ENCODE measurements at regions of chr15 and their contacts with region 1.

Region 1: GRCh38 chr15:99213187-99213811 is 36.1 kb downstream of the TTC23 start:
- DNase-seq: peak; percentile 58 to 93 (median 84)
- H3K4me3 ChIP-seq: no peak overlapping the region
- H3K27ac ChIP-seq: peak overlapping the region in 7 of 59 donors; percentile 4 to 71 (median 25)
- H3K27me3 ChIP-seq: no peaks in the 10 kb centered on the region
- CTCF ChIP-seq: peak; percentile 89 to 99 (median 94)

Region 2: DNA sequence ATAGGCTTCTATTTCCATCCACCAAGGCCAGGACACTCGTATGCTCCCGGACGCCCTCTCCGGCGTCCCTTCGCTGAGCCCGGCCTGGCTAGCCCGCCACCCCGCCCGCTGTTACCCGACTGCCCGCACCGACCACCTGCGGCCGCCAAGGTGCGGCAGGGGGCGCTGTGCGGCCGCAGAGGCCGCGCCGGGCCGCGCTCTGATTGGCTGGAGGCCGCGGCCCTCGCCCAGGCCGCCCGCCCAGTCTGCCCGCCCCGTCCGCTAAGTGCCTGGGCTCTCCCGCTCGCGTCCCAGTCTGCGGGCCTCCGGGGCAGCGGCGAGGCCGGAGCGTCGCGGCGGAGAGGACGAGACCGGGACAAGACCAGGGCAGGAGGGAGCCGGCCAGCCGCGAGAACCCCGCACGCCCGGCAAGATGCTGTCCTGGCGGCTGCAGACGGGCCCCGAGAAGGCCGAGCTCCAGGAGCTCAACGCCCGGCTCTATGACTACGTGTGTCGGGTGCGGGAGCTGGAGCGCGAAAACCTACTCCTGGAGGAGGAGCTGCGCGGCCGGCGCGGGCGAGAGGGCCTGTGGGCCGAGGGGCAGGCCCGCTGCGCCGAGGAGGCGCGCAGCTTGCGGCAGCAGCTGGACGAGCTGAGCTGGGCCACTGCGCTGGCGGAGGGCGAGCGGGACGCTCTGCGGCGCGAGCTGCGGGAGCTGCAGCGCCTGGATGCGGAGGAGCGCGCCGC is 108.3 kb before region 1 on chr15 and contains the start of gene SYNM:
- intact Hi-C with region 1: loop called (anchors 1 to 2 kb)
- DNase-seq: peak; percentile 20 to 90 (median 73)
- H3K4me3 ChIP-seq: peak within 1 kb of the TSS; percentile 53 to 83 (median 74)
- H3K27ac ChIP-seq: peak within 1 kb of the TSS in 57 of 59 donors; percentile 41 to 97 (median 86)
- H3K27me3 ChIP-seq: no peaks in the 10 kb centered on the region
- CTCF ChIP-seq: peak; percentile 50 to 98 (median 86)
- total RNA-seq, gene SYNM: 54.7 to 162 (median 78.7) TPM

Region 3: GRCh38 chr15:99169769-99170311 is 43.5 kb before region 1 on chr15:
- intact Hi-C with region 1: loop called in 1 of 2 experiments (anchors 2 kb)
- DNase-seq: no peak
- H3K4me3 ChIP-seq: no peak overlapping the region
- H3K27ac ChIP-seq: peak overlapping the region in 43 of 59 donors; percentile 2 to 83 (median 57)
- H3K27me3 ChIP-seq: no peaks in the 10 kb centered on the region
- CTCF ChIP-seq: no peak

Region 4: GRCh38 chr15:99592145-99592791 is 379.0 kb after region 1 on chr15:
- intact Hi-C with region 1: no loop called
- DNase-seq: no peak
- H3K4me3 ChIP-seq: no peak overlapping the region
- H3K27ac ChIP-seq: peak overlapping the region in 19 of 59 donors; percentile 1 to 64 (median 21)
- H3K27me3 ChIP-seq: no peaks in the 10 kb centered on the region
- CTCF ChIP-seq: no peak